PC-3 (cell line): ENCODE measurements at regions of chr14 and their contacts with region 1.

Region 1: DNA sequence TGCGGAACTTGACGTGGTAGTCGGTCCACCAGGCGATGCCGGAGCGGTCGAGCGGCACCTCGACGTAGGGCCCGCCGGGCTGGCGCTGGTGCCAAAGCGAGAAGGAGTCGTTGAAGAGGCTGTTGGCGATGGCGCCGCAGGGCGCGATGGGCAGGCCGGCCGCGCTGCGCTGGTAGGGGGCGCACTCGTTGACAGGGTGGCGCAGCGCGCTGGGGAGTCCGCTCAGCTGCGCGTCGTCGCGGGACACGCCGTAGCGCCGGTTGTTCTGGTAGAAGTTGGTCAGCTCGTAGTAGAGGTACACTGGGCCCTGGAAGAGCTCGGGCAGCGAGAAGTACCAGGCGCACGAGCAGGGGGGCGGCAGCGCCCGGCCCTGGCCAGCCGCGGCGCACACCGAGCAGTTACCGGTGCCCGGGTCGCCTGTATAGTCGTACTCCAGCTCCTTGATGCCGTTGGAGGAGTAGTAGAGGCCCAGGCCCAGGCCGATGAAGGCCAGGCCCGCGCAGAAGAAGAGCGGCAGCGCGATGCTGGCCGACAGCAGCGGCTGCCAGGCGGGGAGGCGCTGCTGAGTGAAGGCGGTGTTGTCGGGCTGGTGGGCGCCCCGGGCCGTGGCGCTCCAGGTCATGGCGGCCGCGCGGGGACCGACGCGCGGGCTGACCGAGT is 482 bp downstream of the TMEM30B start:
- DNase-seq: peak; percentile 84
- ATAC-seq: peak; percentile 55
- H3K4me3 ChIP-seq: peak overlapping the region; percentile 85
- H3K27ac ChIP-seq: peak overlapping the region; percentile 82
- H3K4me1 ChIP-seq: peaks cover 58% of the 10 kb centered on the region
- H3K27me3 ChIP-seq: no peaks in the 10 kb centered on the region
- CTCF ChIP-seq: peak; percentile 89

Region 2: DNA sequence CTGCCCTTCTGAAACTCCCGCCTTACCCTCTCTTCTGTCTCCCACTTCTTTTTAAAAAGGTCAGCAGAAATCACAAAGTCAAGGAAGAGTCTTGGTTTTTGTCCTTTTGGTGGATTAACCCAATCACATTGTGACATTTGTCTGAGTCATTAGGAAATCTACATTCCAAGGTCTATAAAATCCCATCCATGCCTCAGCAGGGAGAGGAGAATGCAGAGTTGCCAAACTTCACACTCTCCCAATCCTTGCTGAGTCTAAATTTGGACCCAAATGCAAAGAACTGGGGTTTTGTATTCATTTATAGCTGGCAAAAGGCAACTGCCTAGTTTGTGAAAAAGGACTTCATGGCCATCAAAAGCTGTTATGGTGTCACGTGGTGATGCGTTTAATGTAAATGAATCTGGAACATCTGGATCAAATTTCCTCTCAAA is 67.5 kb before region 1 on chr14:
- CTCF ChIA-PET with region 1: no interaction called
- POLR2A ChIA-PET with region 1: no interaction called
- intact Hi-C with region 1: no loop called
- DNase-seq: peak; percentile 59
- ATAC-seq: no peak
- H3K4me3 ChIP-seq: no peak overlapping the region
- H3K27ac ChIP-seq: no peak overlapping the region
- H3K4me1 ChIP-seq: peaks cover 16% of the 10 kb centered on the region
- H3K27me3 ChIP-seq: no peaks in the 10 kb centered on the region
- CTCF ChIP-seq: no peak

Region 3: GRCh38 chr14:61264010-61264571 is 16.6 kb before region 1 on chr14:
- CTCF ChIA-PET with region 1: interaction called, 25 read pairs
- POLR2A ChIA-PET with region 1: interaction called, 13 read pairs
- intact Hi-C with region 1: no loop called
- DNase-seq: peak; percentile 51
- ATAC-seq: peak; percentile 73
- H3K4me3 ChIP-seq: no peak overlapping the region
- H3K27ac ChIP-seq: peak overlapping the region; percentile 29
- H3K4me1 ChIP-seq: peaks cover 51% of the 10 kb centered on the region
- H3K27me3 ChIP-seq: no peaks in the 10 kb centered on the region
- CTCF ChIP-seq: no peak

Region 4: GRCh38 chr14:61381547-61381946 is 100.9 kb after region 1 on chr14:
- CTCF ChIA-PET with region 1: no interaction called
- POLR2A ChIA-PET with region 1: no interaction called
- intact Hi-C with region 1: no loop called
- DNase-seq: no peak
- ATAC-seq: peak; percentile 14; the same call in 1 of the 2 replicates
- H3K4me3 ChIP-seq: no peak overlapping the region
- H3K27ac ChIP-seq: no peak overlapping the region
- H3K4me1 ChIP-seq: no peaks in the 10 kb centered on the region
- H3K27me3 ChIP-seq: no peaks in the 10 kb centered on the region
- CTCF ChIP-seq: no peak